SK-N-SH (cell line): ENCODE measurements at regions of chr17 and their contacts with region 1.

Region 1: DNA sequence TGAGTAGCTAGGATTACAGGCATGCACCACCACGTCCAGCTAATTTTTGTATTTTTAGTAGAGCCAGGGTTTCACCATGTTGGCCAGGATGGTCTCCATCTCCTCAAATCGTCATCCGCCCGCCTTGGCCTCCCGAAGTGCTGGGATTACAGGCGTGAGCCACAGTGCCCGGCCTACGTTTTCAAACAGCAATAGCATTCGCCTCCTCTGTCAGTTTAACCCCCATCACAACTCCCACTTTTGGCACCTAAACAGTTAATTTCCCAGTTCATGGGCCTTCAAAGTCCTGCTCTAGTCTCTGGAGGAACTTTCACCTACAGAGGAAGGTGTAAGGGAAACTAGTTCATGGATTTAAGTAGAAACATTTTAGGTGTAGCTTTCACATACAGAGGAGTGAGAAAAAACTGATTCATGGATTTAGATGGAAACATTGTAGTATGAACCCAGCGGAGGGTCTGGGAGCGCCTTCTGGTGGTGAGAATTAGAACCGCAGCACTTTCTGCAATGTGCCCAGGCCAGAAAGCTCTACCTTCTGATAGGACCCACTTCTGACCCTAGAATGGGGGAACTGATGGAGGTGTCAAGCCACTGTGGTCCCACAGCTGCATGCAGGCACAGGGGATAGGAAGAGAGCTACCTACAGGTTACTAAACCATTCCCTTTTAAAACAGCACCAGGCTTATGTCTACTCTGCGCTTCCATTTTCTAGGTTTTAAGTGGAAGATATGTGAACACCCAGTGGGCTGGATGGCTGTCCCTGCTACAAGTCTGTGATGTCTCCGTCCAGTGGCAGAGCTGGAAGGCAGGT is 12.0 kb upstream of the MEOX1 start:
- DNase-seq: peak; percentile 79
- H3K4me3 ChIP-seq: no peak overlapping the region
- H3K27ac ChIP-seq: no peak overlapping the region
- H3K4me1 ChIP-seq: peaks cover 0 to 3% of the 10 kb centered on the region in 2 experiments; a peak in 1 of 4 replicates
- H3K27me3 ChIP-seq: no peaks in the 10 kb centered on the region
- CTCF ChIP-seq: peak; percentile 97
- EP300 ChIP-seq: no peak
- RAD21 ChIP-seq: peak; percentile 89

Region 2: GRCh38 chr17:43546319-43547188 is 127.2 kb before region 1 on chr17 and contains the start of gene ETV4:
- CTCF ChIA-PET with region 1: interaction called, 15 read pairs
- POLR2A ChIA-PET with region 1: no interaction called
- DNase-seq: peak; percentile 97
- H3K4me3 ChIP-seq: peak within 1 kb of the TSS; percentile 61 to 69
- H3K27ac ChIP-seq: peak within 1 kb of the TSS; percentile 83 to 95
- H3K4me1 ChIP-seq: peaks cover 12 to 24% of the 10 kb centered on the region in 2 experiments; a peak in 3 of 4 replicates
- H3K27me3 ChIP-seq: no peaks in the 10 kb centered on the region
- CTCF ChIP-seq: no peak
- EP300 ChIP-seq: no peak
- RAD21 ChIP-seq: no peak
- polyA plus RNA-seq, gene ETV4: 27.3 and 33.2 TPM in 2 replicates

Region 3: DNA sequence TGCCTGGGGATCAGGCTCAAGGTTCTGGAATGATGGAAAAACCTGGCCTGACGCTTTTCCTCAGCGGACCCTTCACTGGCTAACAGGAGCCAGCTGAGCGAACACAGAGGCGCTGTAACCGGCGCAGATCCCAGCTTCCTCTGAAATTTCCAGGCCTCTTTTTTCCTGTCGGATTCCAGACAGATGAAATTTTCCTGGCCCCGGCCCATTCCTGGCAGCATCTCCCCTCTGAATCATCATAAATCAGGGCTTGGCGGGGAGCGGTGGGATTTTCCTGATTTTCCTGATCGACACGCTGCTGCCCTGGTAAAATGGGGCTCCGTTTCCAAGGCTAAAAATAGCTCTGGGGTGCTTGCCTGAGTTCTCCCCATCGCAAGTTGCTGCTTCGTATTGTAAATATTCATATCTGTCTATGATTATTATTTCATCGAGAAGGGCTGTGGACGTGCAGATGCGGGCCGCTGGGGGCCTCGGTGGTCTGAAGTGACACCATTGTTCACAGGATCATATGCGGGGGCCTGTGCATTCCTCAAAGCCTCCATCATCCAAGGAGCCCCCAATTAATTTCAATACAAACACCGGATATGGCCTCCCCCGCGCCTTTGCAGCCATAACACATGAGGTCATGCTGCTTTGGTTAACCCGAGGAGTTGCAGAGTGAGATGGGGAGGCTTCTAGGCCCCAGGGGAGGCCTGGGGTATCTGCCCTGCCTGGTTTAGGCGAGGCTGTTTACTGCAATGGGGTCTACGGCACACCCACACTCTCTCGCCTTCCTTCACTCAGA is 81.7 kb before region 1 on chr17:
- CTCF ChIA-PET with region 1: interaction called, 18 read pairs
- POLR2A ChIA-PET with region 1: no interaction called
- DNase-seq: peak; percentile 52
- H3K4me3 ChIP-seq: no peak overlapping the region
- H3K27ac ChIP-seq: peak overlapping the region; percentile 60 to 94
- H3K4me1 ChIP-seq: peaks cover 6 to 22% of the 10 kb centered on the region in 2 experiments; a peak in 3 of 4 replicates
- H3K27me3 ChIP-seq: no peaks in the 10 kb centered on the region
- CTCF ChIP-seq: no peak
- EP300 ChIP-seq: peak in 1 of 2 experiments; percentile 68; a peak in 2 of 4 replicates
- RAD21 ChIP-seq: no peak

Region 4: DNA sequence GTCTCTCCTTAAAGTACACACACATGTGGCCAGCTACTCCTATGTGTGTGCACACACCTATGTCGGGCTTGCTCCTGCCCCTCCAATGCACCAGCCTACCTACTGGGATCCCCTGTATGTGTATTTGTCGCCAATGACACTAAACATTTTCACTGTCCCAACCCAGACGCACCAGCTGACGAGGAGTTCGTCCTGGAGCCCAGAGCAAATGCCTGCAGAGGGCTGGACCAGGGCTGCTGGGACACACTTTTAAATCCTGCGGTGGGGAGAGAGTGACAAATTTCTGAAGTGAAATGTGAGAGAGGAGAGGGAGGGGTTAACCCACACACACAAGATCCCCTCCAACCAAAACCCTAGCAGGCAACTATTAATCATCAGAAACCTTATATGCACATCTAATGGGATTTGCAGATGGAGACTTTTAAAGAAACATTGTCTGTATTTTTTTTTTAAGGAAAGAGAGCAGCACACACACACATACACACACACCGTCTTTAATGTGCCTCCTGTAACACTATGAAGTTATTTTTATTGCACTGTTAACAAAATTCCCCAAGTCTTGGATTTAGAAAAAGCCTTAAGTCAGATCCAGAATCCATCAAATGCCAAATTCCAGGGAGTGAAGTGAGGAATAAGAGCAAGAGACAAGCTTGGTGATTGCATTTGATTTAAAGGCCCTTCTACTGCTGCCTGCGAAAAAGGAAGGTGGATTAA is 11.9 kb before region 1 on chr17 and contains the start of gene MEOX1:
- CTCF ChIA-PET with region 1: interaction called, 38 read pairs
- POLR2A ChIA-PET with region 1: no interaction called
- DNase-seq: no peak
- H3K4me3 ChIP-seq: no peak within 1 kb of the TSS
- H3K27ac ChIP-seq: no peak within 1 kb of the TSS
- H3K4me1 ChIP-seq: no peaks in the 10 kb centered on the region
- H3K27me3 ChIP-seq: no peaks in the 10 kb centered on the region
- CTCF ChIP-seq: no peak
- EP300 ChIP-seq: no peak
- RAD21 ChIP-seq: no peak
- polyA plus RNA-seq, gene MEOX1: 0.05 TPM in 1 of 2 replicates, not detected in the other

Region 5: GRCh38 chr17:43760254-43760852 is 86.6 kb after region 1 on chr17:
- CTCF ChIA-PET with region 1: interaction called, 25 read pairs
- POLR2A ChIA-PET with region 1: no interaction called
- DNase-seq: peak; percentile 94
- H3K4me3 ChIP-seq: peak overlapping the region in 1 of 2 experiments; percentile 45; a peak in 1 of 4 replicates
- H3K27ac ChIP-seq: no peak overlapping the region
- H3K4me1 ChIP-seq: peaks cover 0 to 6% of the 10 kb centered on the region in 2 experiments; a peak in 1 of 4 replicates
- H3K27me3 ChIP-seq: no peaks in the 10 kb centered on the region
- CTCF ChIP-seq: peak; percentile 99
- EP300 ChIP-seq: no peak
- RAD21 ChIP-seq: peak; percentile 100